ENCODE measurements at regions of chr12 and their contacts with region 1.

Region 1: DNA sequence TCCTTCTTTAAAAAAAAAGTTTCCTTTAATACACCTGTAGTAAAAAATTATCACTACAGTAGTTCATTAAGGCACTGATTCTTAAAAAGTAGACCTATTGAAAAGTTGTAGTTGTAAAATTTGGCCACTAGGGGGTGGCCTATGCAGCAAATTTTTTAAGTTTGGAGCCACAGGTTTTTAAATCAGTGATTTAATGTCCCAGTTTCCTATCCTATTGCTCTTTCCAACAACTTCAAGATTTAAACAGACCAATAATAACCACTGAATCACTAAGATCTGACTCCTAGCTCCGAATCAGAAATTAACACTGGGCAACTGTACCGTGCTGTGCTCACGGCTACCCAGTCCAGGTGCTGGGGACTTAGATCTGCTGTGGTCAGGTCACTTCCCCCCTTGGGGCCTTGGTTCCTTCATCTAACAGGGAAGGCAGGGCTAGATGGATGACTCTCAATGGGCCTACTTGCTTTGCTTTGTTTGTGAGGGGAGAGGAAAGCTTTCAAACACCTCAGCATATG is 279.3 kb downstream of the MED13L start:
- DNase-seq: no peak
- ATAC-seq: peak; percentile 54 to 77 (median 66)
- H3K4me3 ChIP-seq: no peak overlapping the region
- H3K27ac ChIP-seq: no peak overlapping the region
- H3K4me1 ChIP-seq: peaks cover 0 to 17% (median 0%) of the 10 kb centered on the region in 4 donors
- H3K27me3 ChIP-seq: no peaks in the 10 kb centered on the region
- CTCF ChIP-seq: peak; percentile 72 to 87 (median 84)
- POLR2A ChIP-seq: no peak

Region 2: GRCh38 chr12:115916910-115917668 is 81.1 kb before region 1 on chr12:
- intact Hi-C with region 1: no loop called
- DNase-seq: peak; percentile 70 to 77 (median 71)
- ATAC-seq: peak; percentile 95 to 98 (median 98)
- H3K4me3 ChIP-seq: peak overlapping the region in 1 of 3 donors; percentile 5
- H3K27ac ChIP-seq: no peak overlapping the region
- H3K4me1 ChIP-seq: peaks cover 0 to 5% (median 0%) of the 10 kb centered on the region in 4 donors
- H3K27me3 ChIP-seq: no peaks in the 10 kb centered on the region
- CTCF ChIP-seq: peak; percentile 91 to 96 (median 93)
- POLR2A ChIP-seq: no peak

Region 3: DNA sequence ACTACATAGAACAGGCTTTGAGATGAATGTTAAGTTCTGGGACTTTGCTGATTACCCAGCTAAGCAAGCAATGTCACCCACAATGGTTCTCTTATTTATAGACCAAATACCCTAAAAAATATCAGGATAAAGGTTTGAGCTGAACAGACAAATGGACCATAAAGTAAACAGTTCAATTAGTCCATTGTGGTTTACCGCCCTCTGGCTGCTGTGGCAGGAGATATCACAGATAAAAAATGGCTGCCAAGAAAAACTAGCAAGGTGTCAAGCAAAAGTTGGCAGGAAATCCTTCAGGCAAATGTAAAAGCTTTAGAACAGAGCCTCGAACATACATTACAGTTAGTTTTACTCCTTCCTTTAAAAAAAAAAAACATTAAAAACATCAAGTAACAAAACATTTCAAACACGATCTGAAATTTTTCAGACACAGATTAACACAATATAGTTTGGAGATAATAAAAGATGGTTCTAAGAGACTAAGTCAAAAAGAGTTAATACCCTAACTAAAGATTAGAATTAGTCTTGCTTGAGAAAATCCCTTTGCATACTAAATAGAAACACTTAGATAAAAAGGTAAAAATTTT is 238.1 kb after region 1 on chr12:
- intact Hi-C with region 1: loop called in 1 of 2 experiments (anchors 10 kb)
- DNase-seq: peak in 2 of 3 donors; percentile 25 to 57
- ATAC-seq: peak; percentile 82 to 90 (median 85)
- H3K4me3 ChIP-seq: no peak overlapping the region
- H3K27ac ChIP-seq: no peak overlapping the region
- H3K4me1 ChIP-seq: peaks cover 0 to 19% (median 2%) of the 10 kb centered on the region in 4 donors
- H3K27me3 ChIP-seq: no peaks in the 10 kb centered on the region
- CTCF ChIP-seq: peak; percentile 74 to 77 (median 75)
- POLR2A ChIP-seq: no peak

Region 4: DNA sequence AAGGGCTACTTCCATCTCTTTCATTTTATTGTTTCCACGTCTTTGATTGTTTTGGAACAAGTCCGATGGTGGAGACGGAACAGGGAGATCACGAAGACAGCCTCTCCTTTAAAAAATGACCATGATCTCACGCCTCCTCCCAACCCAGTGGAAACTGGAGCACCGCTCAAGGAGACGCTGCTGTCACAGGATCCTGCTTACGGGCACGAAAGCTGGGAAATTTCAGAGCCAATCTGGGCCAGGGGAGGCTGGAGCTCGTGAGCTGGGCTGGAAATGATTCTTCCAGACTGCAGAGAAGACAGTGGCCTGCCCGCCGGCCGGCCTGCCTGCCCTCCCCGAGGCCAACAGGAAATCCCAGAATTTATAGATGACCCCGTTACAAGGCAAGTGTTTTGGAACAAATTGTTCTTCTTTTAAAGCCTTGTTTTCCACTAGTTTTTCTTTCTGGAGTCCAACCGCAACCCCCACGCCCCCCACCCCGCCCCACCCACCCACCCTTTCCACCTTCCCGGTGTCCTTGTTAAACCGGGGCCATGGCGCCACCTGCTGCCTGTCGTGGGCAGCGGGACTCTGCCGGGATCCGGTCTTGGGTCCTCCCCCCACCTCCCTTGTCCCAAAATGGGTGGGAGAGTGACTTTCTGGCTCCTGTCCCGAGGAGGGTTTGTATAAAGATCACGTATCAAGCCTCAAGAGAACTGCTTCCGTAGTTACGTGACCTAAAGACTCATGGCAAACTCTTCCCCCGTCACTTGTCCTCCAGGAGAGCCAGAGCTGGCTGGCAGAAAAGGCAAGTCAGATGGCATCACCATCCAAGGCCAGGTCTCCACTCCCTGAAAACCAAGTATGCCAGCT is 601.3 kb after region 1 on chr12:
- intact Hi-C with region 1: loop called in 1 of 2 experiments (anchors 10 kb)
- DNase-seq: peak; percentile 79 to 83 (median 80)
- ATAC-seq: peak; percentile 88 to 94 (median 90)
- H3K4me3 ChIP-seq: peak overlapping the region in 1 of 3 donors; percentile 33
- H3K27ac ChIP-seq: peak overlapping the region; percentile 0 to 43 (median 38)
- H3K4me1 ChIP-seq: peaks cover 0 to 2% (median 0%) of the 10 kb centered on the region in 4 donors
- H3K27me3 ChIP-seq: no peaks in the 10 kb centered on the region
- CTCF ChIP-seq: peak; percentile 48 to 64 (median 54)
- POLR2A ChIP-seq: no peak

Measured in right lobe of liver (tissue), 6 donors.